H1 (cell line): ENCODE measurements at regions of chr3 and their contacts with region 1.

Region 1: GRCh38 chr3:129160891-129161859 is at the start of gene ISY1:
- DNase-seq: peak; percentile 67 to 86
- H3K4me3 ChIP-seq: peak within 1 kb of the TSS; percentile 59 to 96 (median 94)
- H3K27ac ChIP-seq: peak within 1 kb of the TSS; percentile 100
- H3K4me1 ChIP-seq: peaks cover 0 to 3% (median 1%) of the 10 kb centered on the region in 4 experiments; a peak in 4 of 7 replicates
- H3K27me3 ChIP-seq: no peaks in the 10 kb centered on the region
- CTCF ChIP-seq: peak; percentile 76 to 86 (median 84)
- EP300 ChIP-seq: no peak
- POLR2A ChIP-seq: peak; percentile 93 to 97
- RAD21 ChIP-seq: peak; percentile 11 to 43; a peak in 2 of 4 replicates
- total RNA-seq, gene ISY1: 16.6 and 21.8 TPM in 2 replicates

Region 2: GRCh38 chr3:129120254-129121004 is 40.7 kb before region 1 on chr3:
- CTCF ChIA-PET with region 1: interaction called, 6 read pairs
- POLR2A ChIA-PET with region 1: interaction called, 24 read pairs
- DNase-seq: peak; percentile 62 to 83
- H3K4me3 ChIP-seq: peak overlapping the region; percentile 68 to 82 (median 74)
- H3K27ac ChIP-seq: peak overlapping the region; percentile 86
- H3K4me1 ChIP-seq: peaks cover 12 to 21% (median 16%) of the 10 kb centered on the region in 4 experiments
- H3K27me3 ChIP-seq: no peaks in the 10 kb centered on the region
- CTCF ChIP-seq: peak in 2 of 3 experiments; percentile 7 to 23; a peak in 2 of 4 replicates
- EP300 ChIP-seq: no peak
- POLR2A ChIP-seq: peak; percentile 63 to 77
- RAD21 ChIP-seq: no peak; a peak in 1 of 4 replicates

Region 3: DNA sequence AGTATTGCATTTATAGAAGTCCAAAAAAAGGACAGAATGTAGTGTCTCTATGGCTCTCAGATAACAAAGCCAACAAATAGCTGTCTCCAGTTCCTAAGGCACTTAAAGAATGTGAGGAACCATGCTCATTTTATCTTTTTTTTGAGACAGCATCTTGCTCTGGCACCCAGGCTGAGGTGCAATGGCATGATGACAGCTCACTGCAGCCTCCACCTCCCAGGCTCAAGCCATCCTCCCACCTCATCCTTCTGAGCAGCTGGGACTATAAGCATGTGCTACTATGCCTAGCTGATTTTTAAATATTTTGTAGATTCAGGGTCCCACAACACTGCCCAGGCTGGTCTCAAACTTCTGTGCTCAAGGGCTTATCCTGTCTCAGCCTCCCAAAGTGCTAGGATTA is 16.4 kb before region 1 on chr3:
- CTCF ChIA-PET with region 1: interaction called, 10 read pairs
- POLR2A ChIA-PET with region 1: interaction called, 3 read pairs
- DNase-seq: no peak
- H3K4me3 ChIP-seq: no peak overlapping the region
- H3K27ac ChIP-seq: no peak overlapping the region
- H3K4me1 ChIP-seq: no peaks in the 10 kb centered on the region
- H3K27me3 ChIP-seq: no peaks in the 10 kb centered on the region
- CTCF ChIP-seq: no peak
- EP300 ChIP-seq: no peak
- POLR2A ChIP-seq: no peak
- RAD21 ChIP-seq: no peak

Region 4: GRCh38 chr3:129173206-129173605 is 12.0 kb after region 1 on chr3:
- CTCF ChIA-PET with region 1: interaction called, 5 read pairs
- POLR2A ChIA-PET with region 1: interaction called, 22 read pairs
- DNase-seq: no peak
- H3K4me3 ChIP-seq: no peak overlapping the region
- H3K27ac ChIP-seq: no peak overlapping the region
- H3K4me1 ChIP-seq: no peaks in the 10 kb centered on the region
- H3K27me3 ChIP-seq: no peaks in the 10 kb centered on the region
- CTCF ChIP-seq: no peak
- EP300 ChIP-seq: no peak
- POLR2A ChIP-seq: no peak
- RAD21 ChIP-seq: no peak

Region 5: GRCh38 chr3:129278439-129278970 is 117.3 kb after region 1 on chr3 and contains the start of gene HMCES:
- CTCF ChIA-PET with region 1: no interaction called
- POLR2A ChIA-PET with region 1: interaction called, 11 read pairs
- DNase-seq: peak; percentile 66 to 96
- H3K4me3 ChIP-seq: peak within 1 kb of the TSS; percentile 92 to 96 (median 94)
- H3K27ac ChIP-seq: peak within 1 kb of the TSS; percentile 89
- H3K4me1 ChIP-seq: peaks cover 0 to 13% (median 6%) of the 10 kb centered on the region in 4 experiments; a peak in 6 of 7 replicates
- H3K27me3 ChIP-seq: no peaks in the 10 kb centered on the region
- CTCF ChIP-seq: 0 out of 4 replicates have a peak, but pooled peaks of 1 of the 3 experiments have one; percentile 1
- EP300 ChIP-seq: no peak
- POLR2A ChIP-seq: peak in 1 of 2 experiments; percentile 45; a peak in 2 of 3 replicates
- RAD21 ChIP-seq: no peak
- total RNA-seq, gene HMCES: 46.7 and 49.5 TPM in 2 replicates